ENCODE measurements at regions of chr16 and their contacts with region 1.

Region 1: GRCh38 chr16:12257926-12258561 is 281.5 kb downstream of the SNX29 start:
- DNase-seq: peak; percentile 32
- ATAC-seq: no peak
- H3K4me3 Mint-ChIP-seq: no peak overlapping the region
- H3K27ac Mint-ChIP-seq: no peak overlapping the region
- H3K4me1 Mint-ChIP-seq: peaks cover 15% of the 10 kb centered on the region
- H3K27me3 Mint-ChIP-seq: no peaks in the 10 kb centered on the region; the same call in 1 of the 2 replicates
- CTCF ChIP-seq: no peak

Region 2: DNA sequence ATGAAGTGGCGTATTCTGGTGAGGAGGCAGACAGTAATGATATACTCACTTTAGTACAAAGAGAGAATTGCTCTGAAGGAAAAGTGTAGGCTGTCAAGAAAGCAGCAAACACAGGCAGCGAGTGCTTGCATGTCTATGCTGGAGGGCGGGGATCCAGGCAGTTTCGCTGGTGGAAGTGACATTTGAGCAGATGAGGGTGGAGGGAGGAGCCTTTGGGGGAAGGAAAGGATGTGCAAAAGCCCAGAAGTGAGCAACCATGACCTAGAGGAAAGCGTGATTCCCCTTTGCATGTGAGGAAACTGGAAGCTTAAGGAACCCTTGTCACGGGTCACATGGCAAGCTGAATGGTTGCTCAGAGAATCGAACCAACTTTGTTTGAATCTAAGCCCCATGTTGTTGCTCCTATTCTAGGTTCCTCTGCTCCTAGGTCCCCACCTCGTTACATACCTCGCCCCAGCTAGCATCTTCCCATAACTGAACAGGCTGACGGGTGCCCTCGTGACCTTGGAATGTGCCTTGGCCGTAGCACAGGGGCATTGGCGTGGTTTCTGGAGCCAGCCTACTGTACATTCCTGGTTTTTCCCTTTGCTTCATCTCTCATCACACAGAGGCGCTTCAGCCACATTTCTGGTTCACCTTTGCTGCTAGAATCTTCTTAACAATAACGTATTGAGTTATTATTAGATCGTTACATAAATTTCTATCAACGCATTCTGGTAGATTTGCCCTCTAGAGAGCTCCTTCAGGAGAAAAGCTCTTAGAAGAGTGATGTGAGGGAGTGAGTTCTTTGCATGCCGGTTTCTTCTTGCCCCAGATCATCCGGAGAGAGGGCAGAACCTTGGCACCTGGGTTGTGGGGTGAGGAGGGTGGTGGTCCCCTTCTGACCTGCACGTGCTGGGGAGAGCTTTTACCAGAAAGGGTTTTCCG is 89.7 kb before region 1 on chr16:
- CTCF ChIA-PET with region 1: interaction called, 14 read pairs
- POLR2A ChIA-PET with region 1: interaction called, 4 read pairs
- DNase-seq: no peak
- ATAC-seq: no peak
- H3K4me3 Mint-ChIP-seq: no peak overlapping the region
- H3K27ac Mint-ChIP-seq: no peak overlapping the region
- H3K4me1 Mint-ChIP-seq: no peaks in the 10 kb centered on the region
- H3K27me3 Mint-ChIP-seq: no peaks in the 10 kb centered on the region
- CTCF ChIP-seq: no peak

Region 3: GRCh38 chr16:12193031-12193430 is 65.0 kb before region 1 on chr16:
- CTCF ChIA-PET with region 1: no interaction called
- POLR2A ChIA-PET with region 1: no interaction called
- DNase-seq: no peak
- ATAC-seq: peak; percentile 60
- H3K4me3 Mint-ChIP-seq: no peak overlapping the region
- H3K27ac Mint-ChIP-seq: no peak overlapping the region
- H3K4me1 Mint-ChIP-seq: peaks cover 3% of the 10 kb centered on the region; the same call in 1 of the 2 replicates
- H3K27me3 Mint-ChIP-seq: no peaks in the 10 kb centered on the region
- CTCF ChIP-seq: no peak

Region 4: GRCh38 chr16:12203780-12204351 is 54.2 kb before region 1 on chr16:
- CTCF ChIA-PET with region 1: no interaction called
- POLR2A ChIA-PET with region 1: no interaction called
- DNase-seq: no peak
- ATAC-seq: no peak
- H3K4me3 Mint-ChIP-seq: no peak overlapping the region
- H3K27ac Mint-ChIP-seq: no peak overlapping the region
- H3K4me1 Mint-ChIP-seq: 0 out of 2 replicates have a peak, but pooled peaks cover 3% of the 10 kb centered on the region
- H3K27me3 Mint-ChIP-seq: no peaks in the 10 kb centered on the region
- CTCF ChIP-seq: no peak

Region 5: GRCh38 chr16:12240036-12240435 is 18.0 kb before region 1 on chr16:
- CTCF ChIA-PET with region 1: interaction called, 10 read pairs
- POLR2A ChIA-PET with region 1: no interaction called
- DNase-seq: no peak
- ATAC-seq: no peak
- H3K4me3 Mint-ChIP-seq: no peak overlapping the region
- H3K27ac Mint-ChIP-seq: no peak overlapping the region
- H3K4me1 Mint-ChIP-seq: no peaks in the 10 kb centered on the region
- H3K27me3 Mint-ChIP-seq: no peaks in the 10 kb centered on the region
- CTCF ChIP-seq: no peak

Region 6: DNA sequence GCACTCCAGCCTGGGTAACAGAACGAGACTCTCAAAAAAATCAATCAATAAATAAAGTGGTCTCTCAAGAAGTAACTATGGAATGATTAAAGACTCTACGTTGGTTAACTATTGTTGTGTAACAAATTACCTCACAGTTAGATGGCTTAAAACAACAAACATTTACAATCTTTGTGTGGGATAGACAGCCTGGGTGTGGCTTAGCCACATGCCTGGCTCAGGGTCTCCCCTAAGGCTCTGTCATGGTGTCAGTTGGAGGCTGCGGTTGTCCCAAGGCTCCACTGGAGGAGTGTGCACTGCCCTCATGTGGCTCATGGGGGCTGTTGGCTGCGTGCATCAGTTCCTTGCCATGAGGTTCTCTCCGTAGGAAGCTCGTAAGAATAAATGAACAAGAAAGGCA is 13.0 kb after region 1 on chr16:
- CTCF ChIA-PET with region 1: interaction called, 18 read pairs
- POLR2A ChIA-PET with region 1: interaction called, 8 read pairs
- DNase-seq: peak; percentile 62
- ATAC-seq: peak; percentile 99
- H3K4me3 Mint-ChIP-seq: no peak overlapping the region
- H3K27ac Mint-ChIP-seq: no peak overlapping the region
- H3K4me1 Mint-ChIP-seq: no peaks in the 10 kb centered on the region
- H3K27me3 Mint-ChIP-seq: no peaks in the 10 kb centered on the region
- CTCF ChIP-seq: no peak

Region 7: DNA sequence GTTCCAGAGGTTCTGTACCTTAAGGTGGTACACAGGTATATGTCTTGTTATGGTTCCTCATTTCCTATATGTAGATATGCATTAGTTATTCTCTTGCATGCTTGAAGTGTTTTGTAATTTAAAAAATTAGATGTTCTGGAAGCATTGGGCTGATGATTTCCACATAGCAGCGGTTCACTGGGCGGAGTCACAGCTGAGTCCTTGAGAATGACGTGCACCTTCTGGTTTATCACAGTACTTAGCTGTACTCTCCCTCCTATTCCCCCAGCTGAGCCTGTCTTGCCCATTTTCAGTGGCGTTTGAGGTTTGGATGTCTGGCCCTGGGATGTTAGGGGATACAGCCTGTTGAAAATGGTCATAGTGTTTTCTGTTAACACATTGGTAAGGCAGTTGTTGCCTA is 45.6 kb after region 1 on chr16:
- CTCF ChIA-PET with region 1: no interaction called
- POLR2A ChIA-PET with region 1: no interaction called
- DNase-seq: no peak
- ATAC-seq: no peak
- H3K4me3 Mint-ChIP-seq: no peak overlapping the region
- H3K27ac Mint-ChIP-seq: no peak overlapping the region
- H3K4me1 Mint-ChIP-seq: no peaks in the 10 kb centered on the region
- H3K27me3 Mint-ChIP-seq: no peaks in the 10 kb centered on the region
- CTCF ChIP-seq: no peak

Measured in WTC11 (cell line).